ENCODE measurements at regions of chr20 and their contacts with region 1.

Region 1: DNA sequence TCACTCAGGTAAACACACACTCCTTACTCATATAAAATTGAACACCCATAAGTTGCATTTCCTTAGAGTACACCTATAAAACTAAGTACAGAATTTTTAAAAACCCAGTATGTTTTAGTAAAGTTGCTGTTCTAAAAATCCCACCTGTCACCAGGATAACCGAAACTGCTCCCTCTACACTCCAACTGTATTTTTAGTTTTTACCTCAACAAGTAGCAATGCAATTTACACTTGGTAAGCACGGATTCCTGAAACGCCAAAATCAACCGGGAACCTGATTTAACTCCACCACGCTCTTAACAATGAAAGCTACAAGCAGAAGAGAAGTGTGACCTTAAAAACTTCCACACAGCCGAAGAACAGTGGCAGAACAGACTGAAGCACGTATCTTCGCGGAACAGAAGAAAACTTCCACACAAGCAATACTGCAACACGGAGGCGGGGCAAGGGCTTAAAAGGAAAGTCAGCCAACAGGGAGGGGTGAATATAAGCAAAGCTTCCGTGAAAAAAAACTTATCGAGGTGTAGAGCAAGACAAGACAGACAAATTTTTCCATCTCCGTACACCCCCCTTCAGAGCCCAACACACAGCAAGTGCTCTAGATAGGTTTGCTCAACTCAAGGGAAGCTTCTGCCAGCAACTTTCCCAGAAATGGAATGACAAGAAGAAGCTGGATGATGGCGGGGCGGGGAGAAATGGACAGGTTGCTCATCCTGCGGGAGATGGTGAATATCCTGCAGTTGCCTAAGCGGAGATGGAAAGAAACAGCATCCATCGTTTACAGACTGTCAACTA is 1.4 kb downstream of the STAU1 start:
- DNase-seq: peak; percentile 17 to 85 (median 73)
- ATAC-seq: peak; percentile 33
- H3K4me3 ChIP-seq: peak overlapping the region; percentile 88
- H3K4me3 Mint-ChIP-seq: peak overlapping the region; percentile 88 to 100 (median 94)
- H3K27ac ChIP-seq: peak overlapping the region; percentile 97
- H3K27ac Mint-ChIP-seq: peak overlapping the region; percentile 70 to 96 (median 93)
- H3K4me1 ChIP-seq: peaks cover 18% of the 10 kb centered on the region in 2 donors
- H3K4me1 Mint-ChIP-seq: peaks cover 38 to 56% (median 50%) of the 10 kb centered on the region in 7 donors
- H3K27me3 ChIP-seq: no peaks in the 10 kb centered on the region
- H3K27me3 Mint-ChIP-seq: peaks cover 0 to 7% (median 0%) of the 10 kb centered on the region in 5 donors

Region 2: GRCh38 chr20:49132995-49133478 is 53.7 kb before region 1 on chr20:
- CTCF ChIA-PET with region 1: no interaction called
- POLR2A ChIA-PET with region 1: interaction called, 5 read pairs
- intact Hi-C with region 1: loop called (anchors 1 kb)
- DNase-seq: peak in 7 of 9 donors; percentile 33 to 68 (median 62)
- ATAC-seq: peak; percentile 68
- H3K4me3 ChIP-seq: no peak overlapping the region
- H3K4me3 Mint-ChIP-seq: no peak overlapping the region
- H3K27ac ChIP-seq: no peak overlapping the region
- H3K27ac Mint-ChIP-seq: peak overlapping the region in 8 of 9 donors; percentile 1 to 74 (median 62)
- H3K4me1 ChIP-seq: no peaks in the 10 kb centered on the region
- H3K4me1 Mint-ChIP-seq: peaks cover 7 to 16% (median 10%) of the 10 kb centered on the region in 7 donors
- H3K27me3 ChIP-seq: peaks cover 0 to 3% of the 10 kb centered on the region in 2 donors
- H3K27me3 Mint-ChIP-seq: no peaks in the 10 kb centered on the region

Region 3: DNA sequence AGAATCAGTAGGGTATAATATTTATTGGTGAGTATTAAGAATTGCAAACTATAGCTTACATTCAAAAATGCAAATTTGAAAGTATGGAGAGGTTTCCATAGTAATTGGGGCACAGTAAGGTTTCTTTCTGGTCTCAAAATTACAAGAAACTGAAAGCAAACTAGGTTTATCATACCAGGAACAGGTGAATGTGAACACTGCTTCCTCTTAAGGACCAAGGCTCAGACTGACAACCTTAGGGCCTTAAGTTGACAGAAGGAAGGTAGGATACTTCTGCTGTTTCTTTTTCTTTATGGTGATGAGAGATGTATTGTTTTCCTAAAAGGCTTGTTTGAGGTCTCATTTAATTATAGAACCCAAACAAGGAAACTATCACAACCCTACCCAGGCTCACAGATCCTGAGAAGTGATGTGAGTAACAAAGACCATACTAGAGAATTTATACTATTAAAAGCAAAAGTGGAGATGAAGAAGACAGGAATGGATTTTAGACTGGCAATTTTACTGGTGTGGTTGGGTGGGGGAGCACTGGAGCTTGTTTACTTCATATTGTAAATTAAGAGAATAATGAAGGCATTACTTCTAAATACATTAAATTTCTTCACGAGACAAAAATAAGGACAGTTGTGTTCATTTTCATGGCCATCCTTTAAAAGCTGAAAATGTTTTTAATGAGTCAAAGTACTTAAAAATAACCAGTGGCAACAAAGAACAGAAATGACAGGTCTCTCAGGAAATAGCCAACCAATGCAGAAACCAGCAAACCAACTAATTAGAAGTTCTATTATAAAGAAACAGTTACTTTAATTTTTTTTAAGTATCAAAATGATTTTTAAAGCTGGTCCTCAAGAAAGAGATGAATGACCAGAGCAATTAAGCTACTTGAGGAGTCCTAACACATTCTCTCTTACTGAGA is 19.9 kb before region 1 on chr20:
- CTCF ChIA-PET with region 1: no interaction called
- POLR2A ChIA-PET with region 1: interaction called, 3 read pairs
- intact Hi-C with region 1: loop called (anchors 1 to 2 kb)
- DNase-seq: no peak
- ATAC-seq: no peak
- H3K4me3 ChIP-seq: no peak overlapping the region
- H3K4me3 Mint-ChIP-seq: peak overlapping the region in 6 of 10 donors; percentile 2 to 58 (median 42)
- H3K27ac ChIP-seq: peak overlapping the region; percentile 16
- H3K27ac Mint-ChIP-seq: peak overlapping the region in 8 of 9 donors; percentile 9 to 83 (median 72)
- H3K4me1 ChIP-seq: peaks cover 18 to 39% of the 10 kb centered on the region in 2 donors
- H3K4me1 Mint-ChIP-seq: peaks cover 32 to 72% (median 65%) of the 10 kb centered on the region in 7 donors
- H3K27me3 ChIP-seq: no peaks in the 10 kb centered on the region
- H3K27me3 Mint-ChIP-seq: no peaks in the 10 kb centered on the region

Region 4: DNA sequence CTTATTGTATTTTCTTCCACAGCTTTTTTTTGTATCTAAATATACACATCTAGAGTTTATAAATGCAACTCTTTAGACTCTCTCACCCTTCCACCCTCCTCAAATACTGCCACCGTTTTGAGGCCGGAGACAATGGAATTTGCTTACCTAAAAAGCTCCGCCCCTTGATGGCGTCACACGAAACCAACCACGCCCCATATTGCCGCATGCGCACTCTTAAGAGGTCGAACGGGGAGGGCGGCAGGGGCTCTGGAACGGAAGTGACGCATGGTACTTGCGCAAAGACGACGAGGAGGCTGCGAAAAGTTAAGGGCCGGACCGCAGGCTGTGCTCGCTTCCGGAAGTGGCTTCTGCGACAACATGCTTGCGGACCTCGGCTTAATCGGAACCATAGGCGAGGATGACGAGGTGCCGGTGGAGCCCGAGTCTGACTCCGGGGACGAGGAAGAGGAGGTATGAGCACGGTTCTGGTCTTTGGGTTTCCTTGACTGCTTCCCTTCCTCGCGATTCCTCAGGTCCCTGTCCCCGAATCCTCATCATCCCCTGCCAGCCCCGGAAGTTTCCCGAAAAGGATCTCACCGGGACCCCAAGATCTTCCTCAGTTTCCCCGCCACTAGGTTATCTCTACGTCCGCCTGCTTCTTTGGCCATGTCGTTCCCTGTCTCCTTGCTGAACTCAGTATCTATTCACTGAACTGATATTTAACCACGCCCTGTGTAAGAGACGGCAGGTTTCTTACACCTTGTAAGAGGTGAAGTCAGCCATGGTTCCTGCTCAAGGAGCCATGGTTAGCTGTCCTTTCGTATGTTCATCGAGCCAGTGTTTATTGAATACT is 32.6 kb after region 1 on chr20 and contains the start of gene DDX27:
- CTCF ChIA-PET with region 1: interaction called, 12 read pairs
- POLR2A ChIA-PET with region 1: interaction called, 13 read pairs
- intact Hi-C with region 1: loop called (anchors 1 kb)
- DNase-seq: peak; percentile 90 to 98 (median 98)
- ATAC-seq: peak; percentile 92
- H3K4me3 ChIP-seq: peak within 1 kb of the TSS; percentile 91
- H3K4me3 Mint-ChIP-seq: peak within 1 kb of the TSS; percentile 88 to 100 (median 96)
- H3K27ac ChIP-seq: peak within 1 kb of the TSS; percentile 99
- H3K27ac Mint-ChIP-seq: peak within 1 kb of the TSS; percentile 89 to 100 (median 96)
- H3K4me1 ChIP-seq: peaks cover 9 to 11% of the 10 kb centered on the region in 2 donors
- H3K4me1 Mint-ChIP-seq: peaks cover 14 to 42% (median 26%) of the 10 kb centered on the region in 7 donors
- H3K27me3 ChIP-seq: no peaks in the 10 kb centered on the region
- H3K27me3 Mint-ChIP-seq: peaks cover 0 to 2% (median 0%) of the 10 kb centered on the region in 5 donors
- total RNA-seq, gene DDX27: 43.4 to 94.1 (median 65.7) TPM

Region 5: GRCh38 chr20:49713753-49714712 is 527.3 kb after region 1 on chr20 and contains the start of gene B4GALT5:
- CTCF ChIA-PET with region 1: no interaction called
- POLR2A ChIA-PET with region 1: no interaction called
- intact Hi-C with region 1: loop called in 1 of 2 experiments (anchors 5 kb)
- DNase-seq: peak in 8 of 9 donors; percentile 26 to 82 (median 47)
- ATAC-seq: peak; percentile 90
- H3K4me3 ChIP-seq: peak within 1 kb of the TSS; percentile 67
- H3K4me3 Mint-ChIP-seq: peak within 1 kb of the TSS; percentile 86 to 93 (median 90)
- H3K27ac ChIP-seq: peak within 1 kb of the TSS; percentile 66
- H3K27ac Mint-ChIP-seq: peak within 1 kb of the TSS; percentile 53 to 89 (median 81)
- H3K4me1 ChIP-seq: peaks cover 7 to 15% of the 10 kb centered on the region in 2 donors
- H3K4me1 Mint-ChIP-seq: peaks cover 26 to 43% (median 38%) of the 10 kb centered on the region in 7 donors
- H3K27me3 ChIP-seq: no peaks in the 10 kb centered on the region
- H3K27me3 Mint-ChIP-seq: peaks cover 0 to 4% (median 0%) of the 10 kb centered on the region in 5 donors
- total RNA-seq, gene B4GALT5: 3.3 to 23.1 (median 4.6) TPM

Measured in naive thymus-derived CD4-positive, alpha-beta T cell (primary cell).